ENCODE measurements at regions of chr5 and their contacts with region 1.

Region 1: DNA sequence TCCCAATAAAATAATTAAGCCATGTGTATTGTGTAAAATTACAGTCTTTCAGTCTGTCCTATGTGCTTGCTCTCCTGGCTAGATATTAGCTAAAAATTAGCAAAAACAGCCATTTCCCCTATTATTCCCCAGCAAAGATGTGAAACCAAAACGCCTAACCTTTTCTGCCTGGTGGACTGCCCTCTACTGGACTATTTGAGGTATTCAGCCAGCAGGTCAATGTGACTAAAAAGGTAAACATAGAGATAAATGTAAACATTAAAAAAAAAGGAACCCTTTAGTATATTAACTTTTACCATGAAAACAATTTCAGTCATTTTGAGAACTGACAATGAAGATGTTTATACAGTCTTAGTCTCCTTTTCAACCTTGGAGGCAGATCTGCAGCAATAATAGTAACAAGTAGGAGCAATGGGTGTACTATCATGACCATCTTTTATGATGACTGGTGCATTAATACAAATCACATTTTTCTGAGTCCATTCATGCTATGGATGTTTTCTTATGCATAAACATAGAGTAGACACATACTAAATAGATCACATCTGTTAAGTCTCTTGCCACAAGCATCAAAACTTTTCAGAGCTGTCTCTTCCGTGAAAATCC is 10.1 kb downstream of the ATG12 start:
- DNase-seq: peak in 1 of 10 donors; percentile 26
- H3K4me3 ChIP-seq: no peak overlapping the region
- H3K27ac ChIP-seq: peak overlapping the region in 1 of 59 donors; percentile 19
- H3K27me3 ChIP-seq: no peaks in the 10 kb centered on the region
- CTCF ChIP-seq: peak; percentile 57 to 84 (median 76)

Region 2: DNA sequence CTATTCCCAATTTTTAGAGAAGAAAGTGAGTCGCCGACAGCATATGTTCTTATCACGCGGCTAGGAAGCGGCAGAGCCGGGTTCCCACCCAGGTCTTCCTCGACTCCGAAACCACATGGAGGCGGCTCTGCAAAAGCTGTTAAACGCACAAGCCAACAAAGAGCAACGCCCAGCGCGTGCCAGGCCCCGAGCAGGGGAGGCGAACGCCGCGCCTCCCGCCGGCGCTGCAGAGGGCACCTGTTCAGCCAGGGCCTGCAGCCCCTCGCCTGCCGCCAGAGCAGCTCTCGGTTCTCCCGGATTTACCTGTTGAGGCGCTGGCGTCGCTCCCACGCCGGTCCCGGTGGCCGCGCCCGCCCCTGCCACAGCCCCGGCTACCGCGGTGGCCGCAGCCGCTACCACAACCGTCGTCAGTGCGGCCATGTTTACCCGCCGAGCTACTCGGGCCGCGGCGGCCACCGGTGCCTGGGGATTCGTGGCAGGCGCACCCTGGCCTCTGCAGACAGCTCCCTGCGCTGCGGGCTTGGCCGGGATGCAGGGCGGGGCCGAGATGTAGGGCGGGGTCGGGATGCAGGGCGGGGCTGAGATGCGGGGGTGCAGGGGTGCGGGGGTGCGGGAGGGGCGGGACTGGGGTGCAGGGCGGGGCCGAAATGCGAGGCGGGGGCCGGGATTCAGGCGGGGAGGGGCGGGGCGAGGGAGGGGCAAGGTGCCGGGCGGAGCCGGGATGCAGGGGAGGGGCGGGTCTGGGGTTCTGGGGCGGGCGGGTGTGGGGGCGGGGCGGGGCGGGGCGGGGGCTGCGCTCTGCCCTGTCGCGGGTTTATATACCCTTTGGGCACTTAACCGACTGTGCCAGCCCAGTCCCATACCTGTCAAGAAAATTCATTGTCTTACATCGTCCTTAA is 534.9 kb before region 1 on chr5 and contains the start of gene CCDC112:
- intact Hi-C with region 1: loop called in 1 of 2 experiments (anchors 10 kb)
- DNase-seq: peak; percentile 58 to 87 (median 74)
- H3K4me3 ChIP-seq: peak within 1 kb of the TSS; percentile 62 to 99 (median 94)
- H3K27ac ChIP-seq: peak within 1 kb of the TSS in 55 of 59 donors; percentile 13 to 91 (median 77)
- H3K27me3 ChIP-seq: no peaks in the 10 kb centered on the region
- CTCF ChIP-seq: peak in 4 of 56 donors; percentile 11 to 15 (median 14)
- total RNA-seq, gene CCDC112: 5.8 to 17.1 (median 10.8) TPM

Region 3: GRCh38 chr5:115530426-115530825 is 300.8 kb before region 1 on chr5:
- intact Hi-C with region 1: no loop called
- DNase-seq: no peak
- H3K4me3 ChIP-seq: peak overlapping the region in 2 of 59 donors; percentile 0 to 6
- H3K27ac ChIP-seq: no peak overlapping the region
- H3K27me3 ChIP-seq: no peaks in the 10 kb centered on the region
- CTCF ChIP-seq: no peak